B cell (primary cell): ENCODE measurements at regions of chr6 and their contacts with region 1.

Region 1: DNA sequence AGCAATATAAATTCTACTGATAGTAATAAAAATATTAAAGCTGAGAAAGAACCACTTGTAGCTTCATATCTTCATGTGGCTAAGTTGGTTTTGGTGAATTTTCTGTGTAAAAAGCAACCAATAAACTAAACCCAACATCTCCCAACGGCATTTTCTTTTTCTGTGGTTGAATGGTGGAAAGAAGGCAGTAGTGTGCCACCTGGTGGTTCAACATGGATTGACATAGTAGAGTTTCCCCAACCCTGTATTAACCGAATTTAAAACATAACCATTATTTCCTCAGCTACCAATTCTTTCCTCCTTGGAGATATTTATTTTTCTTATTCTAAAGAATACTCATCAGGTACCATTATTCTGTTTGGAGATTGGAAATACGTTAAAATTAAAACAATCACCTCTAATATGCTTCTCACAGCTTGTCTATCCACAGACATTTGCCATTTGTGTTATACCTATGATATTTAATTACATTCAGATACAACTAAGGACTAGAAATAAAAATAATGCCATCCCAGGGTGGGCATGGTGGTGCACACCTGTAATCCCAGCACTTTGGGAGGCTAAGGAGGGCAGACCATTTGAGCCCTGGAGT is 117.1 kb upstream of the EEF1E1 start:
- DNase-seq: peak; percentile 59
- ATAC-seq: peak; percentile 36
- H3K4me3 ChIP-seq: no peak overlapping the region
- H3K4me3 Mint-ChIP-seq: no peak overlapping the region
- H3K27ac ChIP-seq: no peak overlapping the region
- H3K27ac Mint-ChIP-seq: no peak overlapping the region
- H3K4me1 ChIP-seq: no peaks in the 10 kb centered on the region
- H3K4me1 Mint-ChIP-seq: no peaks in the 10 kb centered on the region
- H3K27me3 ChIP-seq: peaks cover 0 to 5% (median 0%) of the 10 kb centered on the region in 4 experiments
- H3K27me3 Mint-ChIP-seq: peaks cover 11% of the 10 kb centered on the region
- CTCF ChIP-seq: peak; percentile 91

Region 2: DNA sequence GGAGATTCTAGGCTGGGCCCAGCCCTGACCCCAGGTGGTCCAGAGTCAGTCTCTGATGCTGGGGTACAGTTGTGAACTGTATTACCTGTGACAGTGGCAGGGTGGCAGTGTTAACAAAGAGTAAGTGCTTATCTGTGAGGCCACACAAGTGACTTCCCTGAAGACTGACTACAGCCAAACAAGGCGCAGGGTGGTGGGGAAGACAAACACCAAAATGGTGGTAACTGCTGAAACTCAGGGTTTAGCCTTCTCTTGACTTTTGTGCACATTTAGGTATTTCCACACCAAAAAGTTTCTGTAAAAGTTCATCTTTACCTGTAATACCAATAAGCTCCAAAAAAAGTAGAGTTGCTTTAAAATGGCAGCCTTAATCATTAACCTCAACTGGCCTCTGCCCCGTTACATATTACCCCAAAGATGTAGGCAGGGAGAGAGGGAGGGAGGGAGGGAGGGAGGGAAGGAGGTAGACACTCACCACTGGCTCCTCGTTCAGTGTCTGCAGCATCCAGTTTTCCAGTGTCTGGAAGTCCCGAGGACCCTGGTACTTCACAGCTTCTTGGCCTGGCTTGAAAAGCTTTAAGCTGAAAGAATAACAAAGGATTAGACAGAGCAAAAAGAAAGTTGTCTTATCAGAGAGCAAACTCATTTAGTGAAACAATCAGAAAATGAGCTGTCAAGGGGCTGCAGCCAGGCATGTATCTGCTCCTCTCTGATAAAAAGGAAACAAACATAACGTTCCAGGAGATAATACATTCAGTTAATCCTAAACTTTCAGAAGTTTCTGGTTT is 320.2 kb before region 1 on chr6:
- CTCF ChIA-PET with region 1: no interaction called
- POLR2A ChIA-PET with region 1: no interaction called
- intact Hi-C with region 1: loop called (anchors 5 kb)
- DNase-seq: peak; percentile 40
- ATAC-seq: peak; percentile 39
- H3K4me3 ChIP-seq: no peak overlapping the region
- H3K4me3 Mint-ChIP-seq: no peak overlapping the region
- H3K27ac ChIP-seq: no peak overlapping the region
- H3K27ac Mint-ChIP-seq: peak overlapping the region; percentile 46
- H3K4me1 ChIP-seq: peaks cover 10 to 17% of the 10 kb centered on the region in 2 donors
- H3K4me1 Mint-ChIP-seq: peaks cover 33% of the 10 kb centered on the region
- H3K27me3 ChIP-seq: no peaks in the 10 kb centered on the region
- H3K27me3 Mint-ChIP-seq: no peaks in the 10 kb centered on the region
- CTCF ChIP-seq: no peak

Region 3: DNA sequence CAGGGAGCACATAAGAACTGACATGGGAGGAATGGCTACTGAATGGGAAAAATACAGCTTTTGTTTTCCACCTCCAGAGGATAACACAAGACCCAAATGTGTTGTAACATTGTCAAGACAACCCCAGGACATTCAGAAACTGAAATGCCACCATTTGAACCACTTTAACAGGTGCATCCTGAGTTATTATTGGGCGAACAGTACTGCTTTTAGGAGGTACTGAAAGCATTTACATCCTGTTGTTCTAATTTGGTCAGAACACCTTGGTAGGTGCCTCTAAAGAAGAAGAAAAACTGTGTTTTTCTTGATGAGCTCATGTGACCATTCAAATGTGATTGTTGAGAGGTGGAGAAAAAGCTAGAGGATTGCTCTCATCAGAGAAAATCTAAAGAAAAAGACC is 302.5 kb before region 1 on chr6:
- CTCF ChIA-PET with region 1: no interaction called
- POLR2A ChIA-PET with region 1: no interaction called
- intact Hi-C with region 1: no loop called
- DNase-seq: peak; percentile 76
- ATAC-seq: peak; percentile 66
- H3K4me3 ChIP-seq: peak overlapping the region in 1 of 5 experiments; percentile 36
- H3K4me3 Mint-ChIP-seq: peak overlapping the region; percentile 63
- H3K27ac ChIP-seq: peak overlapping the region; percentile 79 to 95
- H3K27ac Mint-ChIP-seq: no peak overlapping the region
- H3K4me1 ChIP-seq: peaks cover 40 to 82% of the 10 kb centered on the region in 2 donors
- H3K4me1 Mint-ChIP-seq: peaks cover 19% of the 10 kb centered on the region
- H3K27me3 ChIP-seq: no peaks in the 10 kb centered on the region
- H3K27me3 Mint-ChIP-seq: no peaks in the 10 kb centered on the region
- CTCF ChIP-seq: no peak

Region 4: DNA sequence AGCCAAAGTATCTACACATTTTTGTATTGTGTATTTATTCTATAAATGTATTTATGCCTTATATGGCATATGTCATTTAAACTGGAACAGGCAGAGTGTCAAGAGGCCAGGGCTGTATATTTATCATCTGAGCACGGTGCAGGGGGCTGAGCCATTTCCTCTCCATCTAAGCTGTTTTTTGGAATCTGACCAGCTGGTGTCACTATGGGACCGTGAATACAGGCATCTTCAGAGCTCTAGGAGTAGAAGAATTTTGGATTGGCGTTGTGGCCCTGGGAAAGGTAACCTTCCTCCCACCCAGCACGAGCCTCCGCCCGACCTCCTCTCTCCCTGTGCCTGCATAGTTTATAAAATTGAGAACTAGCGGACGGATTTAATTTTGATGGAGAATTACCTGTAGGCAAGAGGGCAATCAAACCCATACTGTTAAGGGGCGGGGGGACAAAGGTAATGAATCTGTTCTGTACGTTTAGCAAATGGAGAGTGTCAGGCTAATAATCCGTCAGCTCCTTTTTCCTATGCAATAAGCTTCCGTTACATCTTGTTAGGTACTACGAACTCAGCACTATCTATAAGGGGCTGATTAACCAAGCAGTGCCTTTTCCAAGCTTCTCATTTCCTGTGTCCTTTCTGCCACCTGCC is 88.1 kb before region 1 on chr6:
- CTCF ChIA-PET with region 1: interaction called, 49 read pairs
- POLR2A ChIA-PET with region 1: no interaction called
- intact Hi-C with region 1: loop called (anchors 1 kb)
- DNase-seq: peak; percentile 25
- ATAC-seq: no peak
- H3K4me3 ChIP-seq: no peak overlapping the region
- H3K4me3 Mint-ChIP-seq: no peak overlapping the region
- H3K27ac ChIP-seq: no peak overlapping the region
- H3K27ac Mint-ChIP-seq: no peak overlapping the region
- H3K4me1 ChIP-seq: no peaks in the 10 kb centered on the region
- H3K4me1 Mint-ChIP-seq: no peaks in the 10 kb centered on the region
- H3K27me3 ChIP-seq: peaks cover 0 to 4% (median 1%) of the 10 kb centered on the region in 4 experiments
- H3K27me3 Mint-ChIP-seq: peaks cover 43% of the 10 kb centered on the region
- CTCF ChIP-seq: peak; percentile 20

Region 5: GRCh38 chr6:8207200-8208191 is 12.0 kb before region 1 on chr6:
- CTCF ChIA-PET with region 1: interaction called, 34 read pairs
- POLR2A ChIA-PET with region 1: no interaction called
- intact Hi-C with region 1: no loop called
- DNase-seq: no peak
- ATAC-seq: no peak
- H3K4me3 ChIP-seq: no peak overlapping the region
- H3K4me3 Mint-ChIP-seq: no peak overlapping the region
- H3K27ac ChIP-seq: no peak overlapping the region
- H3K27ac Mint-ChIP-seq: no peak overlapping the region
- H3K4me1 ChIP-seq: no peaks in the 10 kb centered on the region
- H3K4me1 Mint-ChIP-seq: no peaks in the 10 kb centered on the region
- H3K27me3 ChIP-seq: peaks cover 0 to 2% (median 0%) of the 10 kb centered on the region in 4 experiments
- H3K27me3 Mint-ChIP-seq: peaks cover 29% of the 10 kb centered on the region
- CTCF ChIP-seq: no peak

Region 6: DNA sequence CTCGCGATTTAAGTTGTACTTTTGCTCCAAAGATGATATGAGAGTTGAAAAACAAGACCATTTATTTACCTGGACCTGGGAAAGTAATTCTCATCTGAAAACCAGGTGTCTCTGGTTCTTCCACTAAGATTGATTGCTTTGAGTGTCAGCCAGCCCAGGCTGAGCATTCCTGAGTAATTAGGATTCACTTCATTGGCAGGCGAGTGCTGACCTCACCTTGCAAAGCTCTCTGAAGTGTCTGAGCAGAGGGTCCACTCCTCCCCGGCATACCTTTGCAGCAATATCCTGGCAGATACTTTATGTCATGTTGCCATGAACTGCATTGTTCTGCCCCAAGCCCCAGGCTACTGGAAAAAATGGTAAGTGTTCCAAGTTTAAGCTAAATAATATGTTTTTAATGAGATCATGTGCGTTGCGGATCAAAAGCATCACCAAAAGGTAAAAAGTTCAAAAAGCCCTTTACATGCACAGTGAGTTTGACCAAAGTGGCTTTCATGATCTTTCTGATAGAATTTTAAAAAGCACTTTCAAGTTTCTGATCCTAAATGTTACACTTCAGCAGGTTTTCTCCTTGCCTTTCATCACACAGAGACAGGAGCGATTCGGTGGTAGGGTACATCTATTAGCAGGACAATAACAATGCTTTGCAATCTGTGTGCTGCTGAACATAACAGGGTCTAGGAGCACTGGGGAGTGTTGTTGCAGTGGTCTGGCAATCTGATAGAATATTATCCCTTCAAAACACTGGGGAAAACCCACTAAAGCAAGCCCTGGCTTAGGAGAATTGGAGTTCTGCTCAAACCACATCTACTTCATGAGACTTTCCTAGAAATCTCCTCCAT is 10.7 kb after region 1 on chr6:
- CTCF ChIA-PET with region 1: interaction called, 18 read pairs
- POLR2A ChIA-PET with region 1: no interaction called
- intact Hi-C with region 1: no loop called
- DNase-seq: no peak
- ATAC-seq: no peak
- H3K4me3 ChIP-seq: no peak overlapping the region
- H3K4me3 Mint-ChIP-seq: no peak overlapping the region
- H3K27ac ChIP-seq: no peak overlapping the region
- H3K27ac Mint-ChIP-seq: no peak overlapping the region
- H3K4me1 ChIP-seq: no peaks in the 10 kb centered on the region
- H3K4me1 Mint-ChIP-seq: no peaks in the 10 kb centered on the region
- H3K27me3 ChIP-seq: peaks cover 0 to 5% (median 0%) of the 10 kb centered on the region in 4 experiments
- H3K27me3 Mint-ChIP-seq: peaks cover 27% of the 10 kb centered on the region
- CTCF ChIP-seq: no peak

Region 7: GRCh38 chr6:8243475-8243874 is 24.0 kb after region 1 on chr6:
- CTCF ChIA-PET with region 1: no interaction called
- POLR2A ChIA-PET with region 1: no interaction called
- intact Hi-C with region 1: no loop called
- DNase-seq: no peak
- ATAC-seq: no peak
- H3K4me3 ChIP-seq: no peak overlapping the region
- H3K4me3 Mint-ChIP-seq: no peak overlapping the region
- H3K27ac ChIP-seq: no peak overlapping the region
- H3K27ac Mint-ChIP-seq: no peak overlapping the region
- H3K4me1 ChIP-seq: no peaks in the 10 kb centered on the region
- H3K4me1 Mint-ChIP-seq: no peaks in the 10 kb centered on the region
- H3K27me3 ChIP-seq: peaks cover 0 to 4% (median 0%) of the 10 kb centered on the region in 4 experiments
- H3K27me3 Mint-ChIP-seq: peaks cover 26% of the 10 kb centered on the region
- CTCF ChIP-seq: no peak

Region 8: GRCh38 chr6:8315154-8315553 is 95.7 kb after region 1 on chr6:
- CTCF ChIA-PET with region 1: no interaction called
- POLR2A ChIA-PET with region 1: no interaction called
- intact Hi-C with region 1: no loop called
- DNase-seq: no peak
- ATAC-seq: no peak
- H3K4me3 ChIP-seq: no peak overlapping the region
- H3K4me3 Mint-ChIP-seq: no peak overlapping the region
- H3K27ac ChIP-seq: no peak overlapping the region
- H3K27ac Mint-ChIP-seq: no peak overlapping the region
- H3K4me1 ChIP-seq: no peaks in the 10 kb centered on the region
- H3K4me1 Mint-ChIP-seq: no peaks in the 10 kb centered on the region
- H3K27me3 ChIP-seq: no peaks in the 10 kb centered on the region
- H3K27me3 Mint-ChIP-seq: peaks cover 6% of the 10 kb centered on the region
- CTCF ChIP-seq: no peak

Region 9: GRCh38 chr6:8342420-8342819 is 123.0 kb after region 1 on chr6:
- CTCF ChIA-PET with region 1: no interaction called
- POLR2A ChIA-PET with region 1: no interaction called
- intact Hi-C with region 1: no loop called
- DNase-seq: no peak
- ATAC-seq: no peak
- H3K4me3 ChIP-seq: no peak overlapping the region
- H3K4me3 Mint-ChIP-seq: no peak overlapping the region
- H3K27ac ChIP-seq: no peak overlapping the region
- H3K27ac Mint-ChIP-seq: no peak overlapping the region
- H3K4me1 ChIP-seq: no peaks in the 10 kb centered on the region
- H3K4me1 Mint-ChIP-seq: no peaks in the 10 kb centered on the region
- H3K27me3 ChIP-seq: peaks cover 0 to 4% (median 3%) of the 10 kb centered on the region in 4 experiments
- H3K27me3 Mint-ChIP-seq: peaks cover 8% of the 10 kb centered on the region
- CTCF ChIP-seq: no peak